ENCODE measurements at regions of chr2 and their contacts with region 1.

Region 1: DNA sequence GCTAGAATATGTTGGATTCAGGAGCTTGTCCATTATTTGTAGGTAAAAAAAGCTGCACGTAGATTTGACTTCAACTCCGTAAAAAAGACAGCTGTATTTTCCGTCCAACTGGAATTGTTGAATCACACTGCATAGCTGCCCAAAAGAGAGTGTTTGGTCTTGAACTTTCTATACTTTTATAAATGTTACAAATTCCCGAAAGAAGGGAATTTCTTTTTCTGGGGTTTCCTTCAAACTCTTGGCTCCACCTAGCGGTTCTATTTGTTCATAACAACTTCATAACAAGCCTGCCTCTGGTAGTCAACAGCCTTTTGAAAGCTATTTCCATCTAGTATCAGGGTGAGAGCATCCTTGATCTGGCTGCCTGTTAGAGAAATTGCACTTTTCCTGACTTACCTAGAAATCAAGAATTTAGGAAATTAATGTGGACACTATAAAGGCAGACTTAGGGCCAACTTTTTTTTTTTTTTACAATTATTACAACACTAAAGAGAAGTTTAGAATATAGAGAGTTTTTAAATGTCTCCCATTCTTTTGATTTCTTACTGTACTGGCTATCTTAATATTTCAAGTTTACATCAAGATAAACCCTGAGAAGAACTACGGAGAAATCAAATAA is 48.1 kb downstream of the TMEM185B start:
- DNase-seq: peak; percentile 25 to 42
- H3K4me3 ChIP-seq: no peak overlapping the region
- H3K27ac ChIP-seq: no peak overlapping the region
- H3K4me1 ChIP-seq: no peaks in the 10 kb centered on the region
- H3K27me3 ChIP-seq: no peaks in the 10 kb centered on the region
- CTCF ChIP-seq: peak; percentile 97

Region 2: DNA sequence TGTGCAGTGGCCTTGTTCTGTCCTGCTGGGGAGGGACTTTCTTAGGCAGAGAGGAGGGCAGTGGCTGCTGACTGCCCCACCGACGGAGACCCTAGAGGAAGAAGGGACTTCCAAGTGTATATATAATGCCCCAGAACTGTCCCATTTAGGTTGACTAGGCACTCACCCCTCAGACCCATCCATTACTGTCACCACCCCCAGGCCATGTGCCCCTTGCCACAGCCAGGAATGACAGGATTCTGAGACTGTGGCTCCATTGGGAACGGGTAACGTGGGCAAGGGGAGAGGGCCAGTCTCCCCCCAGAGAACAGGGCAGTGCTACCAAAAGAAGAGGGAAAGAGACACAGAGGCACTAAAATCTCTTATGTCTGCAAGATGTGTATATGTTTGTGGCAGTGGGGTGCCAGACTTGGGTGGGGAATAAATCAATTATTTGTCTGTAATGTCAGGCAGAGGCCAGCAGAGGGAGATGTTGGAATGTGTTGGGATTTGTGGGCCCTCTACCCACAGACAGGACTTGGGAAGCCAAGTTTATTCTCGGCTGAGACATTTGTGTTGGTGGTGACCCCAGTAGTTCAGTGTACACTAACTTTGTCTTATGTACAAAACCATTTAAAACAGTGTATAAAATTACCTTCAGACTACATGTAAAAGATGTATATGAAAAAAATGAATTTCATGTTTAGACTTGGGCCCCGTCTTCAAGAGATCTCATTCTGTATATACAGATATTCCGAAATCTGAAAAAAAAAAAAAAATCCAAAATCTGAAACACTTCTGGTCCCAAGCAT is 767.4 kb before region 1 on chr2:
- CTCF ChIA-PET with region 1: no interaction called
- POLR2A ChIA-PET with region 1: no interaction called
- intact Hi-C with region 1: loop called (anchors 5 kb)
- DNase-seq: peak; percentile 44 to 57
- H3K4me3 ChIP-seq: no peak overlapping the region
- H3K27ac ChIP-seq: no peak overlapping the region
- H3K4me1 ChIP-seq: peaks cover 5% of the 10 kb centered on the region; the same call in 1 of the 2 replicates
- H3K27me3 ChIP-seq: no peaks in the 10 kb centered on the region
- CTCF ChIP-seq: peak; percentile 98

Region 3: GRCh38 chr2:119702918-119703401 is 472.1 kb before region 1 on chr2:
- CTCF ChIA-PET with region 1: interaction called, 5 read pairs
- POLR2A ChIA-PET with region 1: no interaction called
- intact Hi-C with region 1: loop called (anchors 1 kb)
- DNase-seq: peak; percentile 56 to 80
- H3K4me3 ChIP-seq: no peak overlapping the region
- H3K27ac ChIP-seq: no peak overlapping the region
- H3K4me1 ChIP-seq: no peaks in the 10 kb centered on the region
- H3K27me3 ChIP-seq: no peaks in the 10 kb centered on the region
- CTCF ChIP-seq: peak; percentile 100

Region 4: GRCh38 chr2:119782308-119783027 is 392.6 kb before region 1 on chr2:
- CTCF ChIA-PET with region 1: no interaction called
- POLR2A ChIA-PET with region 1: interaction called, 17 read pairs
- intact Hi-C with region 1: no loop called
- DNase-seq: no peak
- H3K4me3 ChIP-seq: no peak overlapping the region
- H3K27ac ChIP-seq: no peak overlapping the region
- H3K4me1 ChIP-seq: no peaks in the 10 kb centered on the region
- H3K27me3 ChIP-seq: no peaks in the 10 kb centered on the region
- CTCF ChIP-seq: no peak

Region 5: DNA sequence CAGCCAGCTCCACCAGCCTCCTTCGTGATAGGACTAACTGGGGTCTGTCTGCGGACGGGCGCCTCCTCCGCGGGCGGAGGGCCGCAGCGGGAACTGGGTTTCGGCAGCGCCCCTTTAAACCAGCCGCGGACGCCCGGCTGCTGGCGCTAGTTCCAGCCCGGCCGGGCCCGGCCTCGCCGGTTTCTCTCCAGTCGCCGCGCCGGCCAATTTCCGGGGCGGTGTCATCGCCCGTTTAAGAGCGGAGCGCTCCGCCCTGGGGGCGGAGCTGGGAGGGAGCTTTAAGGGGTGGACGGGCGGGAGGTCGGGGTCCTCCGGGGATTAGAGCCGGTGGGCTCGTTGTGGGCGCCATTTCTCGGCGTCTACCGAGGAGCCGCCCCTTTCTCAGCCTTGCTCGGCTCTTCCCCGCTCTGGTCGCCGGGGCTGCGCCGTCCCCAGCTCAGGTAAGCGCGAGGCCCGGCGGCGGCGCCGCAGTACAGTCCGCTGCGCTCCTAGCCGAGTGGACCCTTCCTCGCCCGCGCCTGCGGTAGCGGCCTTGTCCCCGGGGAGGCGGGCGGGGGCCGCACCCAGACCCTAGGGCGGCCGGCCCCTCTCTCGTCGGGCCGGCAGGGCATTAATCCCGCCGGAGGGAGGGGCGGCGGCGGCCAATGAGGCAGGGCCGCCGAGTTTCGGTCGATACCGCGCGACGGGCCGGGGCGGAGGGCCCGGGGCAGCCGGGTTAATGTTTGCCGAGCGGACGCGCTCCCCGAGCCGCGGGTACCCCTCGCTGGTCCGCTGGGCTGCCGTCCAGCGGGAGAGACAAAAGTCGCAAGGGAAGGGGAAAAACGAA is 162.1 kb before region 1 on chr2 and contains the start of gene EPB41L5:
- CTCF ChIA-PET with region 1: interaction called, 4 read pairs
- POLR2A ChIA-PET with region 1: no interaction called
- intact Hi-C with region 1: loop called (anchors 5 kb)
- DNase-seq: peak; percentile 88 to 95
- H3K4me3 ChIP-seq: peak within 1 kb of the TSS; percentile 82
- H3K27ac ChIP-seq: peak within 1 kb of the TSS; percentile 88
- H3K4me1 ChIP-seq: peaks cover 24% of the 10 kb centered on the region
- H3K27me3 ChIP-seq: no peaks in the 10 kb centered on the region
- CTCF ChIP-seq: no peak
- total RNA-seq, gene EPB41L5: 18.4 and 21.6 TPM in 2 replicates

Region 6: GRCh38 chr2:120312861-120313694 is 138.0 kb after region 1 on chr2:
- CTCF ChIA-PET with region 1: interaction called, 15 read pairs
- POLR2A ChIA-PET with region 1: no interaction called
- intact Hi-C with region 1: loop called (anchors 1 kb)
- DNase-seq: peak; percentile 77 to 90
- H3K4me3 ChIP-seq: no peak overlapping the region
- H3K27ac ChIP-seq: no peak overlapping the region
- H3K4me1 ChIP-seq: no peaks in the 10 kb centered on the region
- H3K27me3 ChIP-seq: no peaks in the 10 kb centered on the region
- CTCF ChIP-seq: peak; percentile 98

Region 7: DNA sequence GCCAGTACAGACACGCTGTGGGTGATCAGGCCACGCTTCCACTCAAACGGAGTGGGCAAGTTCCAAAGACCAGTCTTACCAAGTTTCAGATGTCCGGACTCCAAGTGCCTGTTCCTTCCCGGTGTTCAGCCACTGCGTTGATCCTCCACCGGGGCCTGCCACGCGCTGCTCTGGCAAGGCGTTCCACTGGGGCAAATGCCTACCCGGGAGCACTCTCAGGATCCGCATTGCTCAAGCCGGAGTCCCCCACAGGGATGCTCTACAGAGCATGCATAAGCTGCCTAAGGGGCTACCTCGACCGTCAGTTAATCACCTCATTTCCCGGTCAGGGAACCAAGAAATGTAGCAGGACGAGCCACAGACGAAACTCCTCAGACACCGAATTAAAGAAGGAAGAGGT is 1511.1 kb after region 1 on chr2:
- CTCF ChIA-PET with region 1: no interaction called
- POLR2A ChIA-PET with region 1: no interaction called
- intact Hi-C with region 1: no loop called
- DNase-seq: no peak
- H3K4me3 ChIP-seq: no peak overlapping the region
- H3K27ac ChIP-seq: no peak overlapping the region
- H3K4me1 ChIP-seq: no peaks in the 10 kb centered on the region
- H3K27me3 ChIP-seq: no peaks in the 10 kb centered on the region
- CTCF ChIP-seq: no peak